H1 (cell line): ENCODE measurements at regions of chr17 and their contacts with region 1.

Region 1: DNA sequence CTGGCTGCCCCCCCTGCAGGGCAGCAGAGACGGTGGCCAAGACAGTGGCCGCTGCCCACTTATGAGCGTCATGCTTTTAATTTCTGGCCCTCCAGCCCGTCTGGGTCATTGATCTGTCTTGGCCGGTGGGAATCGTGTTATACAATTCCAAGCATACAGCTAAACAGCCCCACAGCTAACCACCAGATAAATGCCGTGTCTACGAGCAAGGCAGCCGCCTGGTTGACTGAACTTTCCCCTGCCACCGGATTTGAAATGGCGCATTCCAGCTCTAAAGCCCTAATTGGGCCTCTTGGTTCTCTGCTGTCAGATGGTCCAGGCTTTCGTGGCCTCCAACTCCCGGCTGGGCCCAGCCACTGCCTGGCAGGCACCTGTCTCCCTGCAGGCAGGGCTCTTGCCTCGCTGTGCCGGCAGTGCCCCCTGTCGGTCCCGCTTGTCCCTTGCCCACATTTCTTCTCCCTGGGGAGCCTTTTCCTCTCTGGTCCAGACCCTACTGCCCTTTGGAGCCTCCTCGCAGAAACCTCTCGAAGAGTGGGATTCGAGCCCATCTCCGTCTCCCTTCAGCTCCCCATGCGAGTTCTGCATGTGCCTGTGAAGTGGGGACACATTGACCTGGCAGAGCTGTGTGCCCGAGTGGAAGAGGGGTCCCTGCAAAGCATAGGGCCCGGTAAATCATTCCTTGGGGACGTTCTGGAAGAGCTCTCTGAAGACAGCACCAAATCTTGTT is 1.8 kb upstream of the RBFOX3 start:
- DNase-seq: peak; percentile 78 to 97
- H3K4me3 ChIP-seq: no peak overlapping the region
- H3K27ac ChIP-seq: no peak overlapping the region
- H3K4me1 ChIP-seq: peaks cover 0 to 17% (median 11%) of the 10 kb centered on the region in 4 experiments; a peak in 6 of 7 replicates
- H3K27me3 ChIP-seq: peaks cover 40 to 51% (median 48%) of the 10 kb centered on the region in 4 experiments
- CTCF ChIP-seq: peak; percentile 93 to 97 (median 97)
- EP300 ChIP-seq: no peak
- POLR2A ChIP-seq: no peak
- RAD21 ChIP-seq: peak; percentile 91

Region 2: DNA sequence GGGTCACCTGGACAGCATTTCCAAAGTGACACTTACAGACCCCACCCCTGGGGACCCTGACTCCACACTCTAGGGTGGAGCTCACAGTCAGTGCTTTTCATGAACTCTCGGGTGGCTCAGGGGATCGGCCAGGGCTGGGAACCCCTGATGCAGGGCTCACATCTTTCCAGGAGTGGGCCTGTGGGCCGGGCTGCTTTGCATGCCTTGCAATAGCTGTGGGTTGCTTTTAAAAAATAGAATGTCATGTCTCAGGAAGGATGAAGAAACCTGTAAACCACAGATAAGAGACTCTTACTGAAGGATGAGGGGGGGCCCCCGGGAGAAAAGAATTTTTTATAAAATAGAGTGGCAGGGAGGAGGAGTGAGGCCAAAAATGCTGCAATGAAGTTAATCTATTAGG is 42.0 kb before region 1 on chr17:
- CTCF ChIA-PET with region 1: no interaction called
- POLR2A ChIA-PET with region 1: no interaction called
- DNase-seq: no peak
- H3K4me3 ChIP-seq: no peak overlapping the region
- H3K27ac ChIP-seq: no peak overlapping the region
- H3K4me1 ChIP-seq: peaks cover 0 to 2% (median 0%) of the 10 kb centered on the region in 4 experiments; a peak in 1 of 7 replicates
- H3K27me3 ChIP-seq: no peaks in the 10 kb centered on the region
- CTCF ChIP-seq: no peak
- EP300 ChIP-seq: no peak
- POLR2A ChIP-seq: no peak
- RAD21 ChIP-seq: no peak

Region 3: GRCh38 chr17:79589669-79590522 is 22.7 kb before region 1 on chr17:
- CTCF ChIA-PET with region 1: interaction called, 15 read pairs
- POLR2A ChIA-PET with region 1: no interaction called
- DNase-seq: no peak
- H3K4me3 ChIP-seq: no peak overlapping the region
- H3K27ac ChIP-seq: no peak overlapping the region
- H3K4me1 ChIP-seq: peaks cover 0 to 6% (median 0%) of the 10 kb centered on the region in 4 experiments; a peak in 1 of 7 replicates
- H3K27me3 ChIP-seq: no peaks in the 10 kb centered on the region
- CTCF ChIP-seq: no peak
- EP300 ChIP-seq: no peak
- POLR2A ChIP-seq: no peak
- RAD21 ChIP-seq: no peak

Region 4: GRCh38 chr17:79595921-79596320 is 16.7 kb before region 1 on chr17:
- CTCF ChIA-PET with region 1: interaction called, 15 read pairs
- POLR2A ChIA-PET with region 1: no interaction called
- DNase-seq: no peak
- H3K4me3 ChIP-seq: no peak overlapping the region
- H3K27ac ChIP-seq: no peak overlapping the region
- H3K4me1 ChIP-seq: peaks cover 0 to 5% (median 4%) of the 10 kb centered on the region in 4 experiments; a peak in 3 of 7 replicates
- H3K27me3 ChIP-seq: peaks cover 0 to 2% (median 0%) of the 10 kb centered on the region in 4 experiments; a peak in 2 of 7 replicates
- CTCF ChIP-seq: no peak
- EP300 ChIP-seq: no peak
- POLR2A ChIP-seq: no peak
- RAD21 ChIP-seq: no peak

Region 5: DNA sequence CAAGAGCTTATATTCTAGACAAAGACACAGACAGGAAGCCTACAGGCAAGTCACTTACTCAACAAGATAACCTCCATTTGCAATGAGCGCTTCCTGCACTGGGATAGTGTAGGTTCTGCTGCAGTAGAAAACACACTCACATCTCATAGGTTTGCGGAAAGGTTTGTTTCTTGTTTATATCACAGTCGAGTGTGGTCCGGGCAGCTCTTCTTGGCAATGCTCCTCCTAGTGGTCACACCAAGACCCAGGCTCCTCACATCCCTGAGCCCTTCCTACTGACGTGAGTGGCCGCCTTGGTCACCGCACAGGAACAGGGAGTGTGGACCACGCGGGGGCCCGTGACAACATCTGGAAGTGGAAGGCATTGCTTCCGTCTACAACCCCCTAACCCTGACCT is 46.2 kb after region 1 on chr17:
- CTCF ChIA-PET with region 1: interaction called, 28 read pairs
- POLR2A ChIA-PET with region 1: no interaction called
- DNase-seq: peak in 1 of 2 experiments; percentile 64
- H3K4me3 ChIP-seq: no peak overlapping the region
- H3K27ac ChIP-seq: no peak overlapping the region
- H3K4me1 ChIP-seq: peaks cover 0 to 6% (median 4%) of the 10 kb centered on the region in 4 experiments; a peak in 5 of 7 replicates
- H3K27me3 ChIP-seq: no peaks in the 10 kb centered on the region; a peak in 1 of 7 replicates
- CTCF ChIP-seq: peak; percentile 57 to 87 (median 86)
- EP300 ChIP-seq: no peak
- POLR2A ChIP-seq: no peak
- RAD21 ChIP-seq: peak; percentile 56 to 66

Region 6: DNA sequence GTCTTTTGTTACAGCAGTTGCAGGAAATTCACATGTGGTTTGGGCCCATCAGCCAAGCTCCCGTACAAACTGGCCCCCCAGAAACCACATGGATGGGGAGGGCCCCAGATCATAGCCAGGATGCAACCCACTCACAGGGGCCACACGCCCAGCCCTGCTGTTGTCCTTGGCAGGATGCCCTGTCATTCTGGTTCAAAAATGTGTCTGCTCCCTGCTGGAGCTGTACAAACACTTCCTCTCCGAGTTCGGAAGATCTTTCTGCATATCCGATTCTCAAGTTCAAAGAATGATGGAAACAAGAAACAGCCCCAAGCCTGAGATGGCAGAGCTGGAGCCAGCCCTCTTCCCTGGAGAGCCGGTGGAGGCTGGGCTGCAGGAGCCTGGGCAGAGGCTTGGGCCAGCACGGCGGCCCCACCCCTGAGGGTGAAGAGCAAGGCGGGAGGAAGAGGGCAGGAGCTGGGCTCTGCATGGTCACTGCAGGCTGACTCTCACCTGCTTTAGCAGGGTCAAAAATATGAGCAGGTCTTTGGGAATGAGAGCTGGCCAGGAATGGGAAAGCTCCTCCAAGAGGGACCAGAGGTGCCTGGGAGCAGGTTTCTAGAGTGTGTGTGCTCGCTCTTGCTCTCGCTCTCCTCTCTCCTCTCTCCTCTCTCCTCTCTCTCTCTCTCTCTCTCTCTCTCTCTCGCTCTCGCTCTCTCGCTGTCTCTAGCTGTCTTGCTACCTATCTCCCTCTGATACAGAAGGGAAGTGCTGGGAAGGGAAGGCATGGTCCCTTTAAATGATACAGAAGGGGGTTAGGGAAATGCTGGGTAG is 83.4 kb after region 1 on chr17:
- CTCF ChIA-PET with region 1: interaction called, 14 read pairs
- POLR2A ChIA-PET with region 1: no interaction called
- DNase-seq: no peak
- H3K4me3 ChIP-seq: no peak overlapping the region
- H3K27ac ChIP-seq: no peak overlapping the region
- H3K4me1 ChIP-seq: peaks cover 3 to 33% (median 20%) of the 10 kb centered on the region in 4 experiments
- H3K27me3 ChIP-seq: peaks cover 0 to 7% (median 0%) of the 10 kb centered on the region in 4 experiments; a peak in 3 of 7 replicates
- CTCF ChIP-seq: no peak
- EP300 ChIP-seq: no peak
- POLR2A ChIP-seq: no peak
- RAD21 ChIP-seq: no peak

Region 7: GRCh38 chr17:79707931-79708891 is 95.6 kb after region 1 on chr17:
- CTCF ChIA-PET with region 1: interaction called, 35 read pairs
- POLR2A ChIA-PET with region 1: no interaction called
- DNase-seq: peak in 1 of 2 experiments; percentile 92
- H3K4me3 ChIP-seq: peak overlapping the region in 2 of 4 experiments; percentile 2 to 48; a peak in 2 of 8 replicates
- H3K27ac ChIP-seq: no peak overlapping the region
- H3K4me1 ChIP-seq: peaks cover 0 to 13% (median 3%) of the 10 kb centered on the region in 4 experiments; a peak in 5 of 7 replicates
- H3K27me3 ChIP-seq: no peaks in the 10 kb centered on the region
- CTCF ChIP-seq: peak; percentile 70 to 75 (median 73)
- EP300 ChIP-seq: no peak
- POLR2A ChIP-seq: no peak
- RAD21 ChIP-seq: peak; percentile 89 to 90